ENCODE measurements at regions of chr19 and their contacts with region 1.

Region 1: DNA sequence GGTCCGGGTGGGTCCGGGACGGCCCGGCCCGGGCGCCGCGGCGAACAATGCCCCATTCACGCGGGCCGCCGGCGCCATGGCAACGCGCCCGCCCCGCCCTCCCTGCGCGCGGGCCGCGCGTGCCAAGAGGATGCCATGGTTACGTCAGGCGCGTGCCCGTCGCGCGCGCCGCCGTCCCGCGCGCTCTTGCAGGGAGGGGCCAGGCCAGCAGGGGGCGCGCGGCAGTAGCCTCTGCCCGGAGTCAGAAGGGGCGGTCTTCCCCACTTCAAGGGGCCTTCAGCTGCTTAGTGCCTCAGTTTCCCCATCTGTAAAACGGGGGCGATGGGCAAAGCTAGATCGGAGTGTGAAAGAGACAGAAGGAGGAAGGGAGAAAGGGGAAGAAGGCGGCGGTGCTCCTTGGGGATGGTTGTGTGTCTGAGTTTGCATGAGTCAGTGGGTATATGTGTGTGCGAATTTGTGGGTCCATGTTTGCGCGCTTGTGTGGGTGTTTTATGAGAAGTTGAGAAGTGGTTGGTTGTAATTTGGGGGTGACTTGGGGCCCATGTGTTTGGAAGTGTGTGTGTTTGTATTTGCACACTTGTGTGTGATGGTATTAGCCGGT is 11.6 kb upstream of the NFIX start:
- DNase-seq: peak; percentile 83
- H3K4me3 ChIP-seq: peak overlapping the region in 2 of 3 experiments; percentile 23 to 35
- H3K27ac ChIP-seq: no peak overlapping the region
- H3K4me1 ChIP-seq: peaks cover 2% of the 10 kb centered on the region
- H3K27me3 ChIP-seq: no peaks in the 10 kb centered on the region
- CTCF ChIP-seq: peak; percentile 91 to 92
- POLR2A ChIP-seq: no peak

Region 2: GRCh38 chr19:12272980-12273901 is 710.4 kb before region 1 on chr19:
- CTCF ChIA-PET with region 1: no interaction called
- POLR2A ChIA-PET with region 1: no interaction called
- dilution Hi-C with region 1: no loop called
- intact Hi-C with region 1: no loop called
- DNase-seq: no peak
- H3K4me3 ChIP-seq: no peak overlapping the region
- H3K27ac ChIP-seq: no peak overlapping the region
- H3K4me1 ChIP-seq: no peaks in the 10 kb centered on the region
- H3K27me3 ChIP-seq: no peaks in the 10 kb centered on the region
- CTCF ChIP-seq: no peak
- POLR2A ChIP-seq: no peak

Region 3: GRCh38 chr19:12965017-12965811 is 18.4 kb before region 1 on chr19:
- CTCF ChIA-PET with region 1: interaction called, 10 read pairs
- POLR2A ChIA-PET with region 1: no interaction called
- dilution Hi-C with region 1: no loop called
- intact Hi-C with region 1: no loop called
- DNase-seq: peak; percentile 74
- H3K4me3 ChIP-seq: peak overlapping the region; percentile 1 to 48 (median 45)
- H3K27ac ChIP-seq: peak overlapping the region; percentile 4
- H3K4me1 ChIP-seq: peaks cover 2% of the 10 kb centered on the region
- H3K27me3 ChIP-seq: no peaks in the 10 kb centered on the region
- CTCF ChIP-seq: peak; percentile 77 to 99
- POLR2A ChIP-seq: no peak

Region 4: DNA sequence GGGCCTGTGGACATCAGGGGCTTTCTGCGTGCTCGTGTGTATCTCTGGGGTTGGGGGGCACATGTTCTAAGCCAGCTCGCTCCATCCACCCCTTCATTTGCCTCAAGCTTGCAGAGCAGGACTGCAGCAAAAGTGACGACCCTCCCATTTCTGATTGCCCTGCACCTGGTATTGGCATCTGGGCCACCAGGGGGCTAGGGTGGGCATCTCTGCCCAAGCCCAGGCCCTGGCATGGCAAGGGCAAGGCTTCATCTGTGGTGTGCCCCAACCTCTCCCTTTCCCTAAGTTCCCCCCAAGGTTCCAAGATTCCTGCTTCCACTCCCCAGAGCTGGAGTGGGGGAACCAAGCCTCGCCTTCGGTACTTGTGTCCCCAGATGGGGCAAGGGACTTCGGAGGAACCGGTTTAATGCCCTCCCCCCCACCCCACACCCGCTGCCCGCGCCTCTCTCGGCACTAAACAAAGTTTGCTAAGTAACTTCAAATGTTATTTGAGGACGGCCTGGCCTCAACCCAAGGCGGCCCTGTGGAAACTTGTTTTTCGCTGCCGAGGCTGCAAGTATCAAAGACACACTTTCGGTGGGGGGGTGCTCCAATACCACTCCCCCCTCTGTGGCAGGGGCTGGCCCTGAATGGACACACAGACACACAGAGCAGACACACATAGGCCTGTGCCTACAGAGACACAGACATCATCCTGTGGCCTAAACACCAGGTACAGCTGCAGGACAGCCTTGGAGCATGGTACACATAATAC is 23.8 kb after region 1 on chr19:
- CTCF ChIA-PET with region 1: interaction called, 10 read pairs
- POLR2A ChIA-PET with region 1: no interaction called
- dilution Hi-C with region 1: no loop called
- intact Hi-C with region 1: no loop called
- DNase-seq: no peak
- H3K4me3 ChIP-seq: no peak overlapping the region
- H3K27ac ChIP-seq: no peak overlapping the region
- H3K4me1 ChIP-seq: no peaks in the 10 kb centered on the region
- H3K27me3 ChIP-seq: peaks cover 0 to 9% of the 10 kb centered on the region in 2 experiments
- CTCF ChIP-seq: no peak
- POLR2A ChIP-seq: no peak

Region 5: DNA sequence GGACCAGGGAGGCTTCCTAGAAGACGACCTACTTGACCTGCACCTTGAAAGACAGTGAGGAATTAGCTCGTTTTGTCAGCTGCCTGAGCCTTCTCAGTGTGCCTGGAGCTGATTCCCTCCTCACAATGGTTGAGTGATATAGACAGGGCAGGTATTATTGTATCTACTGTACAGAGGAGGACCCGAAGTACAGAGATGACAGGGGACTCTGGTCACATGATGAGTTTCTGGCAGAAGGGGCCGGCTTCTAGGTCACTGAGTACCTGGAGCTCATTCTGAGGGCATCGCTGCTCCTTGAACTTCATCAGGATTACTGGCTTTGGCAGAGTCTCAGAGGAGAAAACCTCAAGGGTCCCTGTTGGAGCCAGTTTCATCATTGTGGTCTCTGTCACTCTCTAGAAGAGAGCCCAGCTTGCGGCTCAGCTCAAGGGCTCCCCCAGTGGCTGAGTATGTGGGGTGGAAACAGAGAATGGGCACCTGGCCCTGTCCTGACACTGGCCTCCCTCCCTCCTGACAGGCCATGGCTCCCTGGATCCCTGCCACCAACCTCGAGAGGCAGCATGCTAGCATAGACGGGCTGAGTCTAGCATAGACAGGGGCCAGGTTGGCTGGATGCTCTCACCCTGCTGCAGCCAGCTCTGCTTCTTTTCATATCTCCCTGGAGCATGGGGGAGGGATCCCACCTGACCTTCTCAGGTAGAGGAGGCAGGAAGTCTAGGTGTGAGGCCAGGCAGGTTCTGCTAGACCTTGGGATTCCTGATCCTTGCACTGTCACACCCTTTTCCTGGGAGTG is 50.4 kb after region 1 on chr19:
- CTCF ChIA-PET with region 1: interaction called, 32 read pairs
- POLR2A ChIA-PET with region 1: no interaction called
- dilution Hi-C with region 1: no loop called
- intact Hi-C with region 1: loop called (anchors 1 kb)
- DNase-seq: no peak
- H3K4me3 ChIP-seq: no peak overlapping the region
- H3K27ac ChIP-seq: no peak overlapping the region
- H3K4me1 ChIP-seq: peaks cover 15% of the 10 kb centered on the region
- H3K27me3 ChIP-seq: no peaks in the 10 kb centered on the region
- CTCF ChIP-seq: peak; percentile 77 to 86
- POLR2A ChIP-seq: no peak

Region 6: DNA sequence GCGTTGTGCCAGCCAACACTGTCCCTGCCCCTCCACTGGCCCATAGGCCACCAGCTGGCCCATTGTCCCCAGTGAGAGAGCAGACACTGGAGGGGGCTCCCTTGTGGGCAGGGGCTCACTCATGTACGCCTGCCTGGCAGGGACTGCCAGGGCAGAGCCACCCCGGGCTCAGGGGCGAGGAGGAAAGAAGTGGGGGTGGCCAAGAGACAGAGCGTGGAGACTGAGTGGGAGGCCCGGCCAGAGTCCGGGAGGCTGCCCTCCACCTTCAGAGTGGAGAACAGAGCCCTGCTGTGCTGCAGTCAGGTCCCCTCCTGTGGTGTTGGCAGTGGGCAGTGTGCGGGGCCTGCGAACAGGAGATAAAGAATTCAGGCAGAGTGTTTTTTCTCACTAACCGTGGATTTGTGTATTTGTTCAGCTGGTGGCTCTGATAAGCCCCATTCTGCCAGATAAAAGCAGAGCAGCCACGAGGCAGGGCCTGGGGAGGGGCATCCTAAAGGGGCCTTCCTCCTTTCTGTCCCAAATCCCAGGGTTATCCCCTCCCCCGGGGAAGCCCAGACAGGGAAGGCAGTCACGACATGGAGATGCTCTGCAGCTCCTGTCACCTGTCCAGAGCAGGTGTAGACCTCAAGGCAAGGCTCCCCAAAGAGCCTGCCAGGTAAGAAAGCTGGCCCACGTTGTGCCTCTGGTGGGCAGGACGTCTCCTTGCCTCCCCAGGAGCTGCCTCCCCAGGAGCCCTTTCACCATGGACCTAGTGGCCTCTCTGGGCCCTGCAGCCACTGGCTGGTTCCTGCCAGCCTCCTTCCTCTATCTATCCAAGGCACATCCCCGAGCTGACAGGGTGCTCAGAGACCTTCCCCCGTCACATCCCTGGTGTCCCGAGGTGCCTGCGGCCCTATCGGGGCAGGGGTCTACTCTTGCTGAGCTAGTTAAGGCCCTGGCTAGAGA is 86.0 kb after region 1 on chr19:
- CTCF ChIA-PET with region 1: interaction called, 274 read pairs
- POLR2A ChIA-PET with region 1: interaction called, 9 read pairs
- dilution Hi-C with region 1: no loop called
- intact Hi-C with region 1: no loop called
- DNase-seq: peak; percentile 41
- H3K4me3 ChIP-seq: no peak overlapping the region
- H3K27ac ChIP-seq: no peak overlapping the region
- H3K4me1 ChIP-seq: no peaks in the 10 kb centered on the region
- H3K27me3 ChIP-seq: no peaks in the 10 kb centered on the region
- CTCF ChIP-seq: peak in 1 of 2 donors; percentile 12
- POLR2A ChIP-seq: no peak

Region 7: GRCh38 chr19:13082192-13083007 is 98.8 kb after region 1 on chr19:
- CTCF ChIA-PET with region 1: interaction called, 76 read pairs
- POLR2A ChIA-PET with region 1: no interaction called
- dilution Hi-C with region 1: no loop called
- intact Hi-C with region 1: loop called (anchors 1 kb)
- DNase-seq: peak; percentile 57
- H3K4me3 ChIP-seq: no peak overlapping the region
- H3K27ac ChIP-seq: no peak overlapping the region
- H3K4me1 ChIP-seq: peaks cover 4% of the 10 kb centered on the region
- H3K27me3 ChIP-seq: no peaks in the 10 kb centered on the region
- CTCF ChIP-seq: peak; percentile 39 to 60
- POLR2A ChIP-seq: no peak

Region 8: GRCh38 chr19:13262450-13262849 is 278.8 kb after region 1 on chr19:
- CTCF ChIA-PET with region 1: interaction called, 55 read pairs
- POLR2A ChIA-PET with region 1: no interaction called
- dilution Hi-C with region 1: no loop called
- intact Hi-C with region 1: loop called (anchors 1 kb)
- DNase-seq: peak; percentile 70
- H3K4me3 ChIP-seq: no peak overlapping the region
- H3K27ac ChIP-seq: no peak overlapping the region
- H3K4me1 ChIP-seq: peaks cover 10% of the 10 kb centered on the region
- H3K27me3 ChIP-seq: peaks cover 0 to 2% of the 10 kb centered on the region in 2 experiments
- CTCF ChIP-seq: peak; percentile 32 to 46
- POLR2A ChIP-seq: no peak